A673 (cell line): ENCODE measurements at regions of chr19 and their contacts with region 1.

Region 1: GRCh38 chr19:11293433-11294389 is 2.2 kb upstream of the TSPAN16 start:
- DNase-seq: peak; percentile 95
- H3K4me3 ChIP-seq: peak overlapping the region; percentile 33
- H3K27ac ChIP-seq: peak overlapping the region; percentile 24
- H3K4me1 ChIP-seq: no peaks in the 10 kb centered on the region
- H3K27me3 ChIP-seq: no peaks in the 10 kb centered on the region
- CTCF ChIP-seq: peak; percentile 99

Region 2: DNA sequence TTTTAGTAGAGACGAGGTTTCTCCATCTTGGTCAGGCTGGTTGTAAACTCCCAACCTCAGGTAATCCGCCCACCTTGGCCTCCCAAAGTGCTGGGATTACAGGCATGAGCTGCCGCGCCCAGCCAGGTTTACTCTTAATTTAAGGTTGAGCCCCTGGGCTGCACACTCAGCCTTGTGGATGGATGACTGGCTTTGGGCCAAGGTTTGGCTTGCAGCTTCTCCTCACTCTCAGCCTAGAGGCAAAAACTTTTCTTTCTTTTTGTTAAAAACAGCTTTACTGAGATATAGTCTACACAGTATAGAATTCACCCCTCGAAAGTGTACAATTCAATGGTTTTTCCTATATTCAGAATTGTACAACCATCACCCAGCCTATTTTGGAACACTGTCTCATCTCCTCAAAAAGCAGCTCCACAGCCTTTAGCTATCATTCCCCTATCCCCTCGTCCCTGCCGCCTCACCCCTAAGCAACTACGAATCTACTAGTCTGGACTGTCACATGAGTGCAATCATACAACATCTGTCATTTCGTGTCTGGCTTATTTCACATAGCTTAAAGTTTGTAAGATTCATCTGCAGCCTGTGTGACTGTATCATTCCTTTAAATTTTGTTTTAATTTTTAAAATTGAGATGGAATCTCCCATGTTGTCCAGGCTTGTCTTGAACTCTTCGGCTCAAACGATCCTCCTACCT is 12.2 kb before region 1 on chr19:
- CTCF ChIA-PET with region 1: interaction called, 12 read pairs
- POLR2A ChIA-PET with region 1: no interaction called
- intact Hi-C with region 1: no loop called
- DNase-seq: no peak
- H3K4me3 ChIP-seq: no peak overlapping the region
- H3K27ac ChIP-seq: no peak overlapping the region
- H3K4me1 ChIP-seq: peaks cover 4% of the 10 kb centered on the region
- H3K27me3 ChIP-seq: no peaks in the 10 kb centered on the region
- CTCF ChIP-seq: no peak

Region 3: DNA sequence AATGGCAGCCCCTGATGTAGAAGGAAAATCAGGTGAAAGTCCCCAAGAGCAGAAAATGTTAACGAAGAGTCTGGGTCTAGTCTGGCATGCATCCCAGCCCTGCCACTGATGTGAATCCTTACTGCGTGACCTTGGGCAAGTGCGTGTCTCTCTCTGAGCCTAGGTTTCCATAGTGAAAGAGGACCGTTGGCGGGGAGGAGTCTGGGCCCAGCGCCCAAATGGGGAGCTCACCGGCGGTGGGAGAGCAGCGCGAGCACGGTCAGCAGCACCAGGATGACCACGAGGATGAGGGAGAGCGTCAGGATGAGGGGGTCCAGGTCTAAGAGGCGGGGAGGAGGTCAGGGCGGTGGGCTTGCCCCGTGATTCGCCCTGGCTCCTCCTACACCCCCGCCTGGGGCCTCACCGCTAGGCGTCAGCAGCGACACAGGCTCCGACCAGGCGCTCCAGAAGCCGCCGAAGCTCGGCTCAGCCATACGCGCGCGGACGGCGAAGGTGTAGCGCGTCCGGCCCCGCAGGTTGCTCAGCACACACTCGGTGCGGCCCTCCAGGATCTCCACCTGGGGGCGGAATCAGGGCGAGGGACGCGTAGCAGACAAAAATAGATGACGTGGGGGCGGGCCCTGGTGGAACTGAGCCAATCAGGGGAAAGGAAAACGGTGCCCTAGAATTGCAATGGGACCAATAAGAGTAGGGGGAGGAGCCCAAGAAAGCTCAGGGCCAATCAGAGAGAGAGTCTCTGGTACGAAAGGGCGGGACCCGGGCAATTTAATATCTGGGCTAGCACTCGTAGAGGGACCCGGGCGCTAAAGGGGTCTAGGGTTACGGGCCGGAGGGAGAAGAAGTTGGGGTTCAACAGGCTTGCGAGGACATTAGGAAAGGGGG is 87.2 kb after region 1 on chr19:
- CTCF ChIA-PET with region 1: interaction called, 9 read pairs
- POLR2A ChIA-PET with region 1: no interaction called
- intact Hi-C with region 1: loop called (anchors 5 kb)
- DNase-seq: peak; percentile 99
- H3K4me3 ChIP-seq: peak overlapping the region; percentile 53
- H3K27ac ChIP-seq: peak overlapping the region; percentile 34
- H3K4me1 ChIP-seq: peaks cover 26% of the 10 kb centered on the region
- H3K27me3 ChIP-seq: no peaks in the 10 kb centered on the region
- CTCF ChIP-seq: peak; percentile 83

Region 4: DNA sequence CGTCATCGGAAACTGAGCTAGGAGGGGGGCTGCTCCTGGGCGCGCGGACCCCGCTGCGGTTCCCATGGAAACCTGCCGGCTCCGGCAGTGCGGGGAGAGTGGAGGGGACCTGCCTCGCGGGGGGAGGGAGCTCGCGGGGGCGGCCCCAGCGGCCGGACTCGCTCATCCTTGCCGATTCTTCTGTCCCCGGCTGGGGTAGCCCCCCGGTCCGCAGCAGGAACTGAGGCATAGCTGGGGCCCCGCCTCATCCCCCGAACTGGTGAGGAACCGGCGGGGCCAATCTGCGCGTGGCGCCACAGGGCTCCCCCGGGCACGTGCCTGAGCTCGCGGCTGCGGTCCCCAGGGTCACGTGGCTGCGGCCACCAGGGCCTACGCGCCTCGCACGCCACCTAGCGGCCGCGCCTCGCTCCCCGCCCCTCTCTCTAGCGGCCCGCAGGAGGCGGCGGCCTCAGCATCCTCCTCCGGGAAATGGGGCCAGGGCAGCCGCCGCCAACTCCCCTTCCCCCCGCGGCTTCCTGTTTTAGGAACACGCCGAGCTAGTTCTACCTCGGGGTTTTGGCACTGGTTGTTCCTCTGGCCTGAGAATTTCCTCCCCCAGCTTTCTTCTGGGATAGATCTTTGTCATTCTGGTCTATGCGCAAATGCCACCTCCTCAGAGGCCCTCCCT is 188.8 kb after region 1 on chr19:
- CTCF ChIA-PET with region 1: interaction called, 10 read pairs
- POLR2A ChIA-PET with region 1: no interaction called
- intact Hi-C with region 1: loop called (anchors 2 kb)
- DNase-seq: peak; percentile 92
- H3K4me3 ChIP-seq: peak overlapping the region; percentile 44
- H3K27ac ChIP-seq: peak overlapping the region; percentile 55
- H3K4me1 ChIP-seq: peaks cover 21% of the 10 kb centered on the region
- H3K27me3 ChIP-seq: peaks cover 21% of the 10 kb centered on the region
- CTCF ChIP-seq: peak; percentile 86

Region 5: DNA sequence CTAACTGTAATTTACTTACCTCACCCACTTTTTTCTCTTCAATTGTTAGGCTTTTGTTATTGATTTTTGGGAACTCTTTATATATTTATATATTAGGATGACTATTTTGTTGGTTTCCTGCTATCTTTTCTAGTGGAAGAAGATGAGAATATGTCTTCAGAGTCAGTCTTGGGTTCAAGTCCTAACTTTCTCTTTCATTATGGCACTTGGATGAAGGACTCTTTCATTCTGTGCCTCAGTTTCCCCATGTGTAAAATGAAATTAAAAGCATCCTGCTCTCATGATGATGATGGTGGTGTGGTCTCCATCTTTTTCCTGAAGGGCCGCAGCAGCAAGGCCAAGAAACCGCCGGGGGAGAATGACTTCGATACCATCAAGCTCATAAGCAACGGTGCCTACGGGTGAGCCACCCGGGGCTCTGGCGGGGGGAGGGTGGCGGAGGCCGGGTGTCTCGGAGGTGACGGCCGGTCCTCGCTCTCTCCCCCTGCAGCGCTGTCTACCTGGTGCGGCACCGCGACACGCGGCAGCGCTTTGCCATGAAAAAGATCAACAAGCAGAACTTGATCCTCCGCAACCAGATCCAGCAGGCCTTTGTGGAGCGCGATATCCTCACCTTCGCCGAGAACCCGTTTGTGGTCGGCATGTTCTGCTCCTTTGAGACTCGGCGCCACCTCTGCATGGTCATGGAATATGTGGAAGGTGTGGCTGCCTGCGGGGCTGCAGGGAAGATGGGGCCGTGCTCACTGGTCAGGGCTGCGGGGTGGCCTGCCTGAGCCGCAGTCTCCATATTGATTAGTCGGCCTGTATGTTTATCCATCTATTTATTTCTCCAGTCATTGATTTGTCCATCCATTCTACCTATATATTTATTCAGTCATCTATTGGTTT is 1564.6 kb after region 1 on chr19:
- CTCF ChIA-PET with region 1: interaction called, 10 read pairs
- POLR2A ChIA-PET with region 1: no interaction called
- intact Hi-C with region 1: no loop called
- DNase-seq: no peak
- H3K4me3 ChIP-seq: no peak overlapping the region
- H3K27ac ChIP-seq: no peak overlapping the region
- H3K4me1 ChIP-seq: no peaks in the 10 kb centered on the region
- H3K27me3 ChIP-seq: no peaks in the 10 kb centered on the region
- CTCF ChIP-seq: no peak